Heart right ventricle (tissue), 16 donors: ENCODE measurements at regions of chr20 and their contacts with region 1.

Region 1: DNA sequence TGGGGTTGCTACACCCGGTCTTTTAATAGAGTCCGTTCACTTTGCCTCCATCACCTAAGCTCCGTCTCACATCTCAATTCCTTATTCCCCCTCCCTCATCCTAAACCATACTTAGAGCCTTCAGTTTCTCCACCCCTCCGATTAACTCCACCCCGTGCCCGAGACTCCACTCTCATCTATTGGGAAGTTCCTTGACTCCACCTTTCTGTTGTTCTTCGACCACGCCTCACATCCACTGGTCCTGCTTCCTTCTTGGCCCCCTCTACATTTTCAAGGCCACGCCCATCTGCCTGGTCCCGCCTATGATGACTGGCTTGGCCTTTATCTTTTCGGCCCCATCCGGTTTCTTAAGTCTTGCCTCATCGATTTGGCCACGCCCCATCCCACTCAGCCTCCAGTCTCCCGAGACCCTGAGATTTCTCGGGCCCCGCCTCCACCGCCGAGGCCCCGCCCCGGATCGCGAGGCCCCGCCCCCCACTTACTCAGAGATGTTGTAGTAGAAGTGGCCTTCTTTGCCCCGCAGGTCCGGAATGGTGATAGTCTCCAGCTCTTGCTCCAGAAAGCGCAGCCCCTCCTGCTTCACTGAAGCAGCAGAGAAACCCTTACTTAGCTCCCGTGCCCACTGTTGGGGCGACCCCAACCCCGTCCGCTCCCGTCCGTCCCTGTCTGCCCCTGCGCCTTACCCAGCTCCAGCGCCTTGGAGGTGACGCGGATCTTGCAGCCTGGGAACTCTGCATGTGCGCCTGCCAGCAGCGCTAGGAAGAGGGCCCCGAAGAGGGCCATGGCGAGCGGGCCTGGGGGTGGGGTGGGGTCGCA is 1.1 kb downstream of the PLTP start:
- DNase-seq: peak; percentile 95 to 97
- ATAC-seq: peak; percentile 87 to 95 (median 91)
- H3K4me3 ChIP-seq: peak overlapping the region; percentile 33 to 64 (median 58)
- H3K27ac ChIP-seq: peak overlapping the region; percentile 19 to 84 (median 80)
- H3K4me1 ChIP-seq: peaks cover 6 to 59% (median 27%) of the 10 kb centered on the region in 9 donors
- H3K27me3 ChIP-seq: peaks cover 0 to 11% (median 0%) of the 10 kb centered on the region in 7 donors
- CTCF ChIP-seq: no peak

Region 2: GRCh38 chr20:45611054-45611453 is 299.8 kb before region 1 on chr20:
- intact Hi-C with region 1: no loop called
- DNase-seq: no peak
- ATAC-seq: no peak
- H3K4me3 ChIP-seq: no peak overlapping the region
- H3K27ac ChIP-seq: no peak overlapping the region
- H3K4me1 ChIP-seq: no peaks in the 10 kb centered on the region
- H3K27me3 ChIP-seq: peaks cover 0 to 7% (median 0%) of the 10 kb centered on the region in 7 donors
- CTCF ChIP-seq: no peak

Region 3: GRCh38 chr20:45742581-45742980 is 168.3 kb before region 1 on chr20:
- intact Hi-C with region 1: no loop called
- DNase-seq: no peak
- ATAC-seq: no peak
- H3K4me3 ChIP-seq: no peak overlapping the region
- H3K27ac ChIP-seq: no peak overlapping the region
- H3K4me1 ChIP-seq: no peaks in the 10 kb centered on the region
- H3K27me3 ChIP-seq: peaks cover 0 to 12% (median 0%) of the 10 kb centered on the region in 7 donors
- CTCF ChIP-seq: no peak

Region 4: GRCh38 chr20:45890985-45891983 is 19.6 kb before region 1 on chr20 and contains the starts of genes CTSA and NEURL2:
- intact Hi-C with region 1: loop called in 1 of 10 experiments (anchors 2 kb)
- DNase-seq: peak; percentile 94 to 95
- ATAC-seq: peak; percentile 88 to 96 (median 92)
- H3K4me3 ChIP-seq: peak within 1 kb of the TSS; percentile 69 to 88 (median 74)
- H3K27ac ChIP-seq: peak within 1 kb of the TSS; percentile 78 to 97 (median 92)
- H3K4me1 ChIP-seq: peaks cover 10 to 47% (median 30%) of the 10 kb centered on the region in 9 donors
- H3K27me3 ChIP-seq: no peaks in the 10 kb centered on the region
- CTCF ChIP-seq: peak in 2 of 9 donors; percentile 11 to 21
- total RNA-seq, gene CTSA: 75.1 to 173 (median 112) TPM
- total RNA-seq, gene NEURL2: 6.2 to 11.1 (median 8.3) TPM

Region 5: DNA sequence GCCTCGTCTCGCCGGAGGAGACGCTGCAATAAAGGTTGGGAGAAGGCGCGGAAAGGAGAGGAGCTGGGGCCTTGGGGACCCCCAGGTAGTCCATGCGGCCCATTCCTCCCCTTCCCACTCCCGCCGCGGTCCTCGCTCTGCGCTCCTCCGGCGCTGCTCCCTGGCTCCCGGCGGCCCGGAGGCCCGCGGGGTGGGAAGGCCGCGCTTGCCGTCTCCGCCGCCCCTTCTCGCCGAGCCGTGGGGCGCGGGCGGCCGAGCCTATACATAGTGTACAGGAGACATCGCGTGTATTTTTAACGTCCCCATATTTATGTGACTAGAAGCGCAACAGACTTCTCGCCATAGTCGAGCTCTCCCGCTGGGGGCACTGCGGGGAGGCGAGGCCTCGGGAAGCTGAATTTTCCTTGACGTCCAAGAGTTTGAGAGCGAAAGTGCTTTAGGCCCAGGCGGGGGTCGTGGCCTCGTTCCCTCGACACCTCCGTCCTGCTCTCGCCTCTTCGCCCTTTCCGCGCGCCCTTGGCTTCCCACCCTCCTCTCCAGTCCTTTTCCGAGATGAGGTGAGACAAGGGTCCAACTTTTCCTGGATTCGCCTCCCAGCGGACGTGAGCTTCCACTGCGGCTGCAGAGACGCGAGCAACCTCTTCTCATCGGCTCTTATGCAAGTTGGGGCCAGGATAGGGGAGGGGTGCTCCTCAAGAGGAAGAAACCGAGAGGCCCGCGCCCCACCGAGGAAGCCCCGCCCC is 147.1 kb after region 1 on chr20:
- intact Hi-C with region 1: no loop called
- DNase-seq: peak; percentile 29 to 55
- ATAC-seq: peak; percentile 25 to 50 (median 40)
- H3K4me3 ChIP-seq: peak overlapping the region in 9 of 10 donors; percentile 0 to 49 (median 38)
- H3K27ac ChIP-seq: peak overlapping the region in 1 of 10 donors; percentile 32
- H3K4me1 ChIP-seq: peaks cover 12 to 56% (median 34%) of the 10 kb centered on the region in 9 donors
- H3K27me3 ChIP-seq: peaks cover 0 to 46% (median 19%) of the 10 kb centered on the region in 7 donors
- CTCF ChIP-seq: peak in 5 of 9 donors; percentile 18 to 47 (median 42)

Region 6: GRCh38 chr20:46872328-46873211 is 961.7 kb after region 1 on chr20:
- intact Hi-C with region 1: no loop called
- DNase-seq: no peak
- ATAC-seq: peak in 1 of 8 donors; percentile 48
- H3K4me3 ChIP-seq: peak overlapping the region in 3 of 10 donors; percentile 10 to 21 (median 14)
- H3K27ac ChIP-seq: no peak overlapping the region
- H3K4me1 ChIP-seq: no peaks in the 10 kb centered on the region
- H3K27me3 ChIP-seq: peaks cover 0 to 30% (median 8%) of the 10 kb centered on the region in 7 donors
- CTCF ChIP-seq: no peak